ENCODE measurements at regions of chr7 and their contacts with region 1.

Region 1: DNA sequence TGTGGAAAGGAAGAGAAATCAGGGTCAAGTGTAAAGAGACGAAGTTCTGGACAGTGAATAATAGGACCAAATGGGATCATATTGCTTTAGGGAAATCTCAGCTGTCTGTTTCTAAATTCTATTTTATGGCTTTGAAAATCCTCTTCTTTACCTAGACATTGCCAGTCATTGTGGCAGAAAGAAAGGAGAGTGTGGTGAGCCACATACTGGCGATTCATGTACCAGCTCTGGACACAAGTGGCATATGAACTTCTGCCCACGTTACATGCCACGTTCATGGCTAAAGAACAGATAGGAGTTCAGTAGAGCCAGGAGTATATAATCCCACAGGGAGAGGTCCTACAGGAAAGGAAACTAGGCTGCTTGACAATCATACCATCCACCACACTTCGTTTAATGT is 28.0 kb downstream of the STARD3NL start:
- DNase-seq: no peak
- ATAC-seq: no peak
- H3K4me3 ChIP-seq: no peak overlapping the region
- H3K4me3 Mint-ChIP-seq: no peak overlapping the region
- H3K27ac ChIP-seq: no peak overlapping the region
- H3K27ac Mint-ChIP-seq: peak overlapping the region in 1 of 9 donors; percentile 15
- H3K4me1 ChIP-seq: no peaks in the 10 kb centered on the region
- H3K4me1 Mint-ChIP-seq: peaks cover 0 to 4% (median 0%) of the 10 kb centered on the region in 7 donors
- H3K27me3 ChIP-seq: no peaks in the 10 kb centered on the region
- H3K27me3 Mint-ChIP-seq: no peaks in the 10 kb centered on the region

Region 2: DNA sequence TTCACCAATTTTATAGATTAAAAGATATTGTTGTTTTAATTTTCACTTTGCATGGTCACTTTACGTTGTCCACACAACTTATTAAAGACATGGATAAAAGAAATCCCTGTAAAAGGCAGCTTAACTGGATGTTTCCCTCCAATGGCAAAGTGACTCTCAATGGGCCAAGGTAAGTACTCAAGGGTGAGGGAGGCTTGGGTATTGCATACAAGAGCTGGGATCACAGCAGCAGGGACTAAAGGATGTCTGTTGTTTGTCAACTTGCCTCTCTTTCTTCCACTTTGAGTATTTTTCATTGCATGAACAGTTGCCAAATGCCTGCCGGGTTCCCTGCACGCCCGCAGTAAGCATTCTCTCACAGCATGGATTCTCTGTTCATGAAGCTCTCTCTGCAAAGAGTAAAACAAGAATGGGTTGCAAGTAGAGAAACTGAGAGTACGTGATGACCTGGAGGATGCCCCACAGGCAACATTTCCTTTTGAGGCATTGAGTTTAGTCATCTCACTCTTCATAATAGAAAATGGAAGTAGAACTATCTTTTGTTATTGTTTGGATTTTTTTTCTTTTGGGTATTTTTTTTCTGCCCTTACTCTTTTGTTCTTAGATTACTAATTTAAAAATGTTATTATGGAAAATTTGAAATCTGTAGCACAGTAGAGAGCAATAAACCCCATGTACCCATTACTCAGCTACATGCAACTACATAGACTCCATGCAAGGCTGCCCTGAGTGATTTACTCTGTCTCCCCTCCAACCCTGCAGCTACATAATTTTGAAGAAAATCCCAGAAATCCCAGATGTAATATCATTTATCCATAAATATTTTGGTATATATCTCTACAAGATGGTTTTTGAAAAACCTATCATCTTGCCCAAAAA is 496.2 kb before region 1 on chr7:
- CTCF ChIA-PET with region 1: no interaction called
- POLR2A ChIA-PET with region 1: no interaction called
- intact Hi-C with region 1: no loop called
- DNase-seq: no peak
- ATAC-seq: no peak
- H3K4me3 ChIP-seq: no peak overlapping the region
- H3K4me3 Mint-ChIP-seq: peak overlapping the region in 1 of 10 donors; percentile 22
- H3K27ac ChIP-seq: no peak overlapping the region
- H3K27ac Mint-ChIP-seq: no peak overlapping the region
- H3K4me1 ChIP-seq: no peaks in the 10 kb centered on the region
- H3K4me1 Mint-ChIP-seq: peaks cover 0 to 7% (median 0%) of the 10 kb centered on the region in 7 donors
- H3K27me3 ChIP-seq: no peaks in the 10 kb centered on the region
- H3K27me3 Mint-ChIP-seq: peaks cover 0 to 11% (median 6%) of the 10 kb centered on the region in 5 donors

Region 3: DNA sequence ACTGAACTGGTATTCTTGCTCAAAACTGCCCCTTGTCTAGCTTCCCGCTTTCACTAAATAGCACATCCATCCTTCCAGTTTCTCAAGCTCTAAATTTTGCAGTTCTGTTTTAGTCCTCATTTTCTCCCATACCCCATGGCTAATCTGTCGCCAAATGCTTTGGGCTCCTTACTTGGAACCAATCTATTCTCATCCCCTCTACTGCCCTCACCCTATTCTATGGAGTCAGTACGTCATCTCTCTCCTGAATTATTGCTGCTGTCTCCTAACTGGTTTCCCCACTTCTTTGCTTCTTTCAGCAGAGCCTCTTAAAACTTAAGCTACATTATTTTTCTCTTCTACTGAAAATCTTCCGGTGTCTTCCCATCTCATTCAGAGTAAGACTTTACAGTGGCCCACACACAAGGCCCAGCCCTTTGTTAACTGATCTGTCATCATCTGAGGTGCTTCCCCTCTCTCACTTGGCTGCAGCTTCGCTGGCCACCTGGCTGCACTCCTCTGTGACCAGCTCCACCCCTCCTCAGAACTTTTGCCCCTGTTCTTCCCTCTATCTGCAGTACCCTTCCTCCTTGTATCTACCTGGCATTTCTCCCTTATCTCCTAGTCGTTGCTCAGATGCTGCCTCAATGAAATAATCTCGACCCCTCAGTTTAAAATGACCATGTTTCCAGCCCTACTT is 18.1 kb before region 1 on chr7:
- CTCF ChIA-PET with region 1: interaction called, 3 read pairs
- POLR2A ChIA-PET with region 1: no interaction called
- intact Hi-C with region 1: loop called in 1 of 2 experiments (anchors 2 kb)
- DNase-seq: no peak
- ATAC-seq: no peak
- H3K4me3 ChIP-seq: no peak overlapping the region
- H3K4me3 Mint-ChIP-seq: no peak overlapping the region
- H3K27ac ChIP-seq: no peak overlapping the region
- H3K27ac Mint-ChIP-seq: peak overlapping the region in 1 of 9 donors; percentile 44
- H3K4me1 ChIP-seq: no peaks in the 10 kb centered on the region
- H3K4me1 Mint-ChIP-seq: peaks cover 27 to 58% (median 49%) of the 10 kb centered on the region in 7 donors
- H3K27me3 ChIP-seq: no peaks in the 10 kb centered on the region
- H3K27me3 Mint-ChIP-seq: no peaks in the 10 kb centered on the region

Region 4: DNA sequence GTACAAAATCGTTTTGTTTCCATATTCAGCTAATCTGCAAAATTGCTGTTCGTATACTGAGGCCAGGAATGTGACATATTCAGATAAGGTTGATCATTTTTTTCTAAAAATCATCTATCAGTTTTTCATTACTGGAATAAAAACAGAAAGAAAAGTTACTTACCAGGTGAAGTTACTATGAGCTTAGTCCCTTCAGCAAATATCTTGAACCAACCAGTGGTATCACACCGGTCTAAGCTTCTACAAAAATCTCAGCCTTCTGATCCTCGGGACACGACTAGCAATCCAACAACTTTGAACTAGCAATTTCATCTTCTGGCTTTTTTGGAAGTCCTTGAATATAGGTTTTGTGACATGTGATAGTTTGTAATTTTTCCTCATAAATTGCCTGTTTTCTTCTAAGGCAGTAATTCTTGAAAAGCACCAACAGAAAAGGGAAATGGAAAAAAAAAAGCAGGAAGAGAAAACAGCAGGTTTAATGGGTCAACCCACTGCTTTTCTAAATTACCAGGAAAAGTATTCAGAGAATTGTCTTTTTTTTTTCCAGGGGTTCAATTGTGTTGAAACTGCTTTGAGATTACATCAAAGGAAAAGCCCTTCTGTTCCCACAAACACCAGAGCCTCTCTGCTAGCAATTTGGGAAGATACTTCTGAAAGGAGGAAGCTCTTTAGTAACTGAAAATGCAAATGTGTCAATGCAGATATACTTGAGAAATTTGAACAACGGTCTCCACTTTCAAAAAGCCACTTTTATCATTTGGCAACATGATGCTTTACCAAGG is 70.2 kb after region 1 on chr7:
- CTCF ChIA-PET with region 1: no interaction called
- POLR2A ChIA-PET with region 1: no interaction called
- intact Hi-C with region 1: no loop called
- DNase-seq: no peak
- ATAC-seq: no peak
- H3K4me3 ChIP-seq: no peak overlapping the region
- H3K4me3 Mint-ChIP-seq: peak overlapping the region in 5 of 10 donors; percentile 7 to 86 (median 53)
- H3K27ac ChIP-seq: no peak overlapping the region
- H3K27ac Mint-ChIP-seq: peak overlapping the region in 1 of 9 donors; percentile 8
- H3K4me1 ChIP-seq: no peaks in the 10 kb centered on the region
- H3K4me1 Mint-ChIP-seq: peaks cover 0 to 13% (median 0%) of the 10 kb centered on the region in 7 donors
- H3K27me3 ChIP-seq: no peaks in the 10 kb centered on the region
- H3K27me3 Mint-ChIP-seq: no peaks in the 10 kb centered on the region